Posterior vena cava (tissue), 2 donors: ENCODE measurements at regions of chr1 and their contacts with region 1.

Region 1: DNA sequence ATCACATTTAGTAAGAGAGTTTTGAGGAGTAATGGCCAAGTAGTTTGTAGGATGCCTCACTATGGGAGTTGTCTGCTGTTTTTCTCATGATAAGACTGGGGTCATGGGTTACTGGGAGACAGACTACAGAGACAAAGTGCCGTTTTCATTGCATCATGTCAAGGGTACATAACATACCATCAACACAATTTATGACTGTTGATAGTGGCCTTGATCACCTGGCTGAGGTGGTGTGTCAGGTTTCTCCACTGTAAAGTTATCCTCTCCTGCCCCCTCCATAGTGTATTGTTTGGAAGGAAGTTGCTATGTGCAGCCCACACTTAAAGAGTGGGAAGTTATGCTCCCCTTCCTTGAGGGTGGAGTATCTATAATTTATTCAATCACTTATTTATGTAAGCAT is 263.5 kb upstream of the POU3F1 start:
- DNase-seq: no peak

Region 2: GRCh38 chr1:37595440-37596319 is 714.4 kb before region 1 on chr1 and contains the start of gene GNL2:
- intact Hi-C with region 1: loop called in 1 of 2 experiments (anchors 5 kb)
- DNase-seq: peak; percentile 100
- total RNA-seq, gene GNL2: 35.7 to 40.0 TPM

Region 3: GRCh38 chr1:39525366-39526165 is 1215.5 kb after region 1 on chr1:
- intact Hi-C with region 1: no loop called
- DNase-seq: peak; percentile 70